Activated CD4-positive, alpha-beta T cell treated with anti-CD3 and anti-CD28 coated beads for 36 hours (primary cell): ENCODE measurements at regions of chrX and their contacts with region 1.

Region 1: GRCh38 chrX:40580537-40581335 is at the start of gene ATP6AP2:
- DNase-seq: peak; percentile 94
- ATAC-seq: peak; percentile 98
- H3K4me3 Mint-ChIP-seq: peak within 1 kb of the TSS; percentile 77
- H3K27ac Mint-ChIP-seq: peak within 1 kb of the TSS; percentile 86
- H3K4me1 Mint-ChIP-seq: peaks cover 29% of the 10 kb centered on the region
- H3K27me3 Mint-ChIP-seq: no peaks in the 10 kb centered on the region
- total RNA-seq, gene ATP6AP2: 39.9 to 52.2 TPM

Region 2: DNA sequence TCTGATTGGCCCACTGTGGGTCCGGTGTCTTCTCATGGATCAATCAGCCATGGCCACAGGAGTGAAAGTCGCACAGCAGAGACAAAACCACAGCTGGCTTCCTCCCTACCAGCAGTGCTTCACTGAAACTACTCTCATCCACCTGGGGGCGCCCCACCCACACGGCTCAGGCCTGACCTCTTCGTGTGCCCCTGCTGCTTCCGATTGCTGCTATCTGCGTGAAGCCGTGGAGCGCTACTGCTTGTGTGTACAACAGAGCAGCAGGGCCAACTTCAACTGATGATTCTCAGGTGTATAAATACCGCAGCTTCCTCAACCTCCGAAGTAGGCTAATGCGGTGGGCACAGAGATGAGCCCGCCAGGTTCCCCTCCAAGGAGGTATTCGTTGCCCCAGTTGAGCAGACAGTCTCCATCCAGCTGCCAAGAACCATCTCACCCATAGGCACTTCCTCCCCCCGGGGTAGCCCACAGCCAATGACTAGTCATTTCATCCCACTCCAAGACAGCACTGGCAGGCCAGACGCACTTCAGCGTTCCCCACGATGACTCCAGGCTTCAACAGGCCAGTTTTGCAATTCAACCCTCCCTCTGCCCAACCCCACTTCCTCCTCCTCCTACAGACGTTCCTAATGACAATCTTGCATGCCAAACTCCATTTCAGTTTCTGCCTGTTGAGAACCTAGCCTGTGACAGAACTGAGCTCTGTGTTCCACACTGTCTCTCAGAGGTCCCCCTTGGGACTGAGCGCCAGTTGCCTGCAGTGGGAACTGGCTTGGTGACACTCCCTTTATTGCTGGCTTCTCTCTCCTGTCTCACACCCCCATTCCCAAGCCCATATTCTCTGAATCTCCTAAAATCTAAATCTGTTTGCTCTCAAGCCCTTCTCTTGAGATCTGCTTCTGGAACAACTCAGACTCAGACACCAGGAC is 41.3 kb before region 1 on chrX:
- CTCF ChIA-PET with region 1: interaction called, 6 read pairs
- POLR2A ChIA-PET with region 1: no interaction called
- intact Hi-C with region 1: loop called in 1 of 2 experiments (anchors 2 kb)
- DNase-seq: peak; percentile 86
- ATAC-seq: peak; percentile 91
- H3K4me3 Mint-ChIP-seq: no peak overlapping the region
- H3K27ac Mint-ChIP-seq: peak overlapping the region; percentile 69
- H3K4me1 Mint-ChIP-seq: peaks cover 20% of the 10 kb centered on the region
- H3K27me3 Mint-ChIP-seq: no peaks in the 10 kb centered on the region

Region 3: GRCh38 chrX:40570346-40571093 is 10.2 kb before region 1 on chrX:
- CTCF ChIA-PET with region 1: interaction called, 3 read pairs
- POLR2A ChIA-PET with region 1: no interaction called
- intact Hi-C with region 1: loop called in 1 of 2 experiments (anchors 1 kb)
- DNase-seq: peak; percentile 14
- ATAC-seq: peak; percentile 63
- H3K4me3 Mint-ChIP-seq: peak overlapping the region; percentile 67
- H3K27ac Mint-ChIP-seq: peak overlapping the region; percentile 91
- H3K4me1 Mint-ChIP-seq: peaks cover 17% of the 10 kb centered on the region
- H3K27me3 Mint-ChIP-seq: no peaks in the 10 kb centered on the region

Region 4: GRCh38 chrX:40591126-40591525 is 10.4 kb after region 1 on chrX:
- CTCF ChIA-PET with region 1: interaction called, 3 read pairs
- POLR2A ChIA-PET with region 1: interaction called, 11 read pairs
- intact Hi-C with region 1: loop called (anchors 1 kb)
- DNase-seq: no peak
- ATAC-seq: no peak
- H3K4me3 Mint-ChIP-seq: no peak overlapping the region
- H3K27ac Mint-ChIP-seq: no peak overlapping the region
- H3K4me1 Mint-ChIP-seq: peaks cover 39% of the 10 kb centered on the region
- H3K27me3 Mint-ChIP-seq: no peaks in the 10 kb centered on the region